ENCODE measurements at regions of chr13 and their contacts with region 1.

Region 1: DNA sequence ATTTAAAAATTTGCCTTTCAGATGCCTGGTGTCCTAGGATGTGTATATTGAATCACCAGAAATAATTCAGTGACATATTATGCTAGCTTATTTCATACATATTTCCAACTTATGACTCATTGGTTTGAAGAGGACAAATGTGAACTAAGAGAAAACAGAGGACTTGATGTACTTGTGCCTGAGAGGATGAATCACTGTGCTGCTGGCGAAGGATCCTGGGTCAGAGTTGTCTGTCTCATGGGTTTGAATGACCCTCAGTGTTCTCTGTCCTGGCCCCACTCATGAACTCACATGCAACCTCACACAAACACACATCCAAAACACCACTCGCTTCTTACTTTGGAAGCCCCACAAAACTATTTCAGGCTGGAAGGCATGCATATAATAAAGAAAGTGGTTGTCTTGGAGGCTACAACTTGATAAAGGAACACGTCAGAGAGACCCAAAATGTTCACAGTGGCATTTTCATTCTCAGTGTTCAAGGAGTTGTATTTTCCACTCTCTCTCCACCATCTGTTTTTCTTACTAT is 129.0 kb upstream of the SPRY2 start:
- DNase-seq: peak; percentile 82
- ATAC-seq: peak; percentile 99

Region 2: DNA sequence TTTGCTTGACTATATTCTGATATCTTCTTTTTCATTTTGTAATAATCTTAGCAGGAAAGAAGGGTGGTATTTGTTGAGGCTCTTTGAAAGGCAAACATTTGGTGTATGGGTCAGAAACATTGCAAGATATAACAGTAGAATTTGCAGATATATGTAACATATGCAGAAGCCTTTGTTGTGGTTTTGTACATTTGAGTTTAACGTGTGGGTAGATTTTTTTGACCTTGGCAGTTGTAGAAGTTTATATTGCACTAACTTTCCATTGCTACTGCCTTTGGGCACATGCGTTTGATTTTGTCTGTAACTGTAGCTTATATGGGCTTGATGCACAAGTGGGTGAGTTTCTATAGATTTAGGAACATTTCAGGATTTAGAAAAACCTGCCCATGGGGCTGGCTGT is 50.5 kb before region 1 on chr13:
- intact Hi-C with region 1: no loop called
- DNase-seq: no peak
- ATAC-seq: no peak

Region 3: GRCh38 chr13:80604098-80604497 is 134.2 kb after region 1 on chr13:
- intact Hi-C with region 1: loop called (anchors 10 kb)
- DNase-seq: no peak
- ATAC-seq: peak; percentile 85

Region 4: DNA sequence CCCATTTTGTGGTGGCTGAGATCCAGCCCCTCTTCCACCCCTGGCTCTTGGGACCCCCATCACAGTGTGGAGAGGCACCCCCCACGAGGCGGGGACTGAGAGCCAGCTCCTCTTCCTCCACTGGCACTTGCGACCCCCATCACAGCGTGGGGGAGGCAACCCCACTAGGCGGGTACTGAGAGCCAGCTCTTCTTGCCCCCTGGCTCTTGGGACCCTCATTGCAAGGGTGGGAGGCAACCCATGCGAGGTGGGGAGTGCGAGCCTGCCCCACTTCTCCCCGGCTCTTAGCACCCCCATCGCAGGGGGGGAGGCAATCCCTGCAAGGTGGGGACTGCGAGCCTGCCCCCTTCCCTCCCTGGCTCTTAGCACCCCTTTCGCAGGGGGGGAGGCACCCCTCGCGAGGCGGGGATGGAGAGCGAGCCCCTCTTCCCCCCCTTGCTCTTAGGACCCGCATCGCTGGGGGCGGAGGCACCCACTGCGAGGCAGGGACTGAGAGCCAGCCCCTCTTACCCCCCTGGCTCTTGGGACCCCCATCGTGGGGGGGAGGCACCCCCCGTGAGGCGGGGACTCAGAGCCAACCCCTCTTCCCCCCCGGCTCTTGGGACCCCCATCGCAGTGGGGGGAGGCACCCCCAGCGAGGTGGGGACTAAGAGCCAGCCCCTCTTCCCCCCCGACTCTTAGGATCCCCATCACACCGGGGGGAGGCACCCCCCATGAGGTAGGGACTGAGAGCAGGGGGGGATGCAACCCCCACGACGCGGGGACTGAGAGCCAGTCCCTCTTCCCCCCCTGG is 235.7 kb after region 1 on chr13:
- intact Hi-C with region 1: no loop called
- DNase-seq: no peak
- ATAC-seq: no peak